Activated CD4-positive, alpha-beta T cell treated with anti-CD3 and anti-CD28 coated beads for 36 hours (primary cell): ENCODE measurements at regions of chr2 and their contacts with region 1.

Region 1: DNA sequence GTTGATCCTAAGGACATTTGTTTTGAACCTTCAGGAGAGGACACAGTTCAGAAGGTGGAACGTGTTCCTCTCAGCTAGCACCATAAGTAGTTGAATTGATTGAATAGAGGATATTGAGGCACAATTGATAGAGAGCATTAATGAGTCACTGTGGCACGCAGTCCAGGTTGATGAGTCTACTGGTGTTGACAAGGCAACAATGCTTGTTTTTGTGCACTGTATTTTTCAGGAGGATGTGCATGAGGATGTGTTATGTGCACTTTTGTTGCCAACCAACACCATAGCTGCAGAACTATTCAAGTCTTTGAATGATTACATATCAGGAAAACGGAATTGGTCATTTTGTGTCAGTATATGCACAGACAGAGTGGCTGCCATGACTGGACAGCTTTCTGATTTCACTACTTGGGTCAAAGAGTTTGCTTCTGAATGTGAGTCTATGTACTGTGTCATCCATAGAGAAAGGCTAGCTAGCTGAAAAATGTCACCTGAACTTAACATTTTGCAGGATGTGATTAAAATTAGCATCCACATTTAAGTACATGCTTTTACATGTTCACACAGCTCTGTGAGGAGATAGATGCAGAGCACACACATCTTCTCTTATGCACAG is 140.1 kb upstream of the B3GNT2 start:
- DNase-seq: no peak
- ATAC-seq: no peak
- H3K4me3 Mint-ChIP-seq: no peak overlapping the region
- H3K27ac Mint-ChIP-seq: no peak overlapping the region
- H3K4me1 Mint-ChIP-seq: peaks cover 16% of the 10 kb centered on the region
- H3K27me3 Mint-ChIP-seq: no peaks in the 10 kb centered on the region

Region 2: DNA sequence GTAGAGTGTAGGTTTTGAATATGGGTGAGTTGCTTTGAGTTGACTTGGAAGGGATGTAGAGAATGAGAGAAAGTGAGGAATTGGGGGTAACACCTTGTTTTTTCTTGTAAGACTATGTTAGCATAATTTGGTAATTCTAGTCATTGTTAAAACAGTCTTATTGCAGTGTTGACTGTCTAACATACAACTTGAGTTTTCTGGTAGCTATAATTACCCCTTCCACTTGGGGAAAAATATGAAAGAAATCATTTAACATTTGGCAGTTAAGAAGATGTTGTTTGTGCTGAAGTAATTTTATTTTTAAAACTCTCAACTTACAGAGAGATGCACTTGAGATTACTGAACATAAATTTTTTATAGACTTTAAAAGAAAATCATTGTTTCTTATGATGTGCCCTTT is 42.2 kb before region 1 on chr2:
- CTCF ChIA-PET with region 1: no interaction called
- POLR2A ChIA-PET with region 1: no interaction called
- intact Hi-C with region 1: loop called in 1 of 2 experiments (anchors 1 kb)
- DNase-seq: no peak
- ATAC-seq: no peak
- H3K4me3 Mint-ChIP-seq: no peak overlapping the region
- H3K27ac Mint-ChIP-seq: no peak overlapping the region
- H3K4me1 Mint-ChIP-seq: no peaks in the 10 kb centered on the region
- H3K27me3 Mint-ChIP-seq: no peaks in the 10 kb centered on the region

Region 3: GRCh38 chr2:62112179-62112578 is 56.3 kb after region 1 on chr2:
- CTCF ChIA-PET with region 1: no interaction called
- POLR2A ChIA-PET with region 1: no interaction called
- intact Hi-C with region 1: no loop called
- DNase-seq: no peak
- ATAC-seq: no peak
- H3K4me3 Mint-ChIP-seq: no peak overlapping the region
- H3K27ac Mint-ChIP-seq: no peak overlapping the region
- H3K4me1 Mint-ChIP-seq: no peaks in the 10 kb centered on the region
- H3K27me3 Mint-ChIP-seq: no peaks in the 10 kb centered on the region